Naive thymus-derived CD4-positive, alpha-beta T cell (primary cell): ENCODE measurements at regions of chr3 and their contacts with region 1.

Region 1: GRCh38 chr3:45929042-45929679 is 14.1 kb upstream of the CXCR6 start:
- DNase-seq: peak; percentile 49 to 79 (median 64)
- ATAC-seq: peak; percentile 88
- H3K4me3 ChIP-seq: no peak overlapping the region
- H3K4me3 Mint-ChIP-seq: no peak overlapping the region
- H3K27ac ChIP-seq: no peak overlapping the region
- H3K27ac Mint-ChIP-seq: peak overlapping the region in 2 of 9 donors; percentile 54 to 73
- H3K4me1 ChIP-seq: no peaks in the 10 kb centered on the region
- H3K4me1 Mint-ChIP-seq: peaks cover 4 to 9% (median 5%) of the 10 kb centered on the region in 7 donors
- H3K27me3 ChIP-seq: no peaks in the 10 kb centered on the region
- H3K27me3 Mint-ChIP-seq: no peaks in the 10 kb centered on the region

Region 2: GRCh38 chr3:45593708-45594609 is 335.2 kb before region 1 on chr3:
- CTCF ChIA-PET with region 1: no interaction called
- POLR2A ChIA-PET with region 1: no interaction called
- intact Hi-C with region 1: loop called in 1 of 2 experiments (anchors 1 kb)
- DNase-seq: peak; percentile 46 to 83 (median 70)
- ATAC-seq: peak; percentile 83
- H3K4me3 ChIP-seq: peak overlapping the region; percentile 71
- H3K4me3 Mint-ChIP-seq: peak overlapping the region; percentile 84 to 99 (median 90)
- H3K27ac ChIP-seq: peak overlapping the region; percentile 72
- H3K27ac Mint-ChIP-seq: peak overlapping the region; percentile 85 to 96 (median 91)
- H3K4me1 ChIP-seq: peaks cover 44 to 58% of the 10 kb centered on the region in 2 donors
- H3K4me1 Mint-ChIP-seq: peaks cover 48 to 61% (median 55%) of the 10 kb centered on the region in 7 donors
- H3K27me3 ChIP-seq: no peaks in the 10 kb centered on the region
- H3K27me3 Mint-ChIP-seq: peaks cover 0 to 3% (median 0%) of the 10 kb centered on the region in 5 donors

Region 3: GRCh38 chr3:45665101-45665572 is 264.0 kb before region 1 on chr3:
- CTCF ChIA-PET with region 1: interaction called, 4 read pairs
- POLR2A ChIA-PET with region 1: no interaction called
- intact Hi-C with region 1: loop called in 1 of 2 experiments (anchors 1 kb)
- DNase-seq: peak in 8 of 9 donors; percentile 49 to 79 (median 75)
- ATAC-seq: peak; percentile 74
- H3K4me3 ChIP-seq: peak overlapping the region; percentile 64
- H3K4me3 Mint-ChIP-seq: peak overlapping the region; percentile 80 to 96 (median 89)
- H3K27ac ChIP-seq: peak overlapping the region; percentile 81
- H3K27ac Mint-ChIP-seq: peak overlapping the region; percentile 85 to 97 (median 92)
- H3K4me1 ChIP-seq: peaks cover 13 to 19% of the 10 kb centered on the region in 2 donors
- H3K4me1 Mint-ChIP-seq: peaks cover 15 to 49% (median 33%) of the 10 kb centered on the region in 7 donors
- H3K27me3 ChIP-seq: no peaks in the 10 kb centered on the region
- H3K27me3 Mint-ChIP-seq: no peaks in the 10 kb centered on the region

Region 4: GRCh38 chr3:45841757-45842491 is 87.2 kb before region 1 on chr3 and contains the start of gene LZTFL1:
- CTCF ChIA-PET with region 1: interaction called, 3 read pairs
- POLR2A ChIA-PET with region 1: no interaction called
- intact Hi-C with region 1: loop called in 1 of 2 experiments (anchors 1 kb)
- DNase-seq: peak; percentile 62 to 94 (median 91)
- ATAC-seq: peak; percentile 94
- H3K4me3 ChIP-seq: peak within 1 kb of the TSS; percentile 77
- H3K4me3 Mint-ChIP-seq: peak within 1 kb of the TSS; percentile 90 to 97 (median 94)
- H3K27ac ChIP-seq: peak within 1 kb of the TSS; percentile 88
- H3K27ac Mint-ChIP-seq: peak within 1 kb of the TSS; percentile 86 to 98 (median 94)
- H3K4me1 ChIP-seq: peaks cover 8 to 13% of the 10 kb centered on the region in 2 donors
- H3K4me1 Mint-ChIP-seq: peaks cover 6 to 41% (median 25%) of the 10 kb centered on the region in 7 donors
- H3K27me3 ChIP-seq: no peaks in the 10 kb centered on the region
- H3K27me3 Mint-ChIP-seq: peaks cover 0 to 65% (median 0%) of the 10 kb centered on the region in 5 donors
- total RNA-seq, gene LZTFL1: 8.5 to 15.7 (median 12.6) TPM

Region 5: DNA sequence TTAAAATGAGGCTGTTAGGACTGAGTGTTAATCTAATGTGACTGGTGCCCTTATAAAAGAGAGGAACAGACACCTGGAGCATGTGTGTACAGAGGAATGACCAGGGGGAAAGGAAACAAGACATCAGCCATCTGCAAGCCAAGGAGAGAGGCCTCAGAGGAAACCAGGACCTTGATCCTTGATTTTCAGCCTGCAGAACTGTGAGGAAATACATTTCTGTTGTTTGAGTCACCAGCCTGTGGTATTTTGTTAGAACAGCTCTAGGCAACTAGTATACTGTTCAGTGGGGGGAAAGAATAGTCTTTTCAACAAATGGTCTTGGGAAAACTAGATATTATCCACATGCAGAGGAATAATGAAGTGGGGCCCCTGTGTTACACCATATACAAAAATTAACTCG is 198.3 kb after region 1 on chr3:
- CTCF ChIA-PET with region 1: no interaction called
- POLR2A ChIA-PET with region 1: no interaction called
- intact Hi-C with region 1: no loop called
- DNase-seq: no peak
- ATAC-seq: no peak
- H3K4me3 ChIP-seq: no peak overlapping the region
- H3K4me3 Mint-ChIP-seq: no peak overlapping the region
- H3K27ac ChIP-seq: no peak overlapping the region
- H3K27ac Mint-ChIP-seq: peak overlapping the region in 1 of 9 donors; percentile 10
- H3K4me1 ChIP-seq: peaks cover 8 to 11% of the 10 kb centered on the region in 2 donors
- H3K4me1 Mint-ChIP-seq: peaks cover 15 to 49% (median 20%) of the 10 kb centered on the region in 7 donors
- H3K27me3 ChIP-seq: no peaks in the 10 kb centered on the region
- H3K27me3 Mint-ChIP-seq: peaks cover 0 to 41% (median 7%) of the 10 kb centered on the region in 5 donors

Region 6: GRCh38 chr3:46549408-46549904 is 620.3 kb after region 1 on chr3:
- CTCF ChIA-PET with region 1: no interaction called
- POLR2A ChIA-PET with region 1: no interaction called
- intact Hi-C with region 1: no loop called
- DNase-seq: no peak
- ATAC-seq: no peak
- H3K4me3 ChIP-seq: no peak overlapping the region
- H3K4me3 Mint-ChIP-seq: no peak overlapping the region
- H3K27ac ChIP-seq: no peak overlapping the region
- H3K27ac Mint-ChIP-seq: peak overlapping the region in 4 of 9 donors; percentile 13 to 76 (median 36)
- H3K4me1 ChIP-seq: no peaks in the 10 kb centered on the region
- H3K4me1 Mint-ChIP-seq: peaks cover 7 to 28% (median 25%) of the 10 kb centered on the region in 7 donors
- H3K27me3 ChIP-seq: no peaks in the 10 kb centered on the region
- H3K27me3 Mint-ChIP-seq: peaks cover 0 to 56% (median 5%) of the 10 kb centered on the region in 5 donors